Activated CD4-positive, alpha-beta T cell treated with anti-CD3 and anti-CD28 coated beads for 36 hours (primary cell): ENCODE measurements at regions of chr5 and their contacts with region 1.

Region 1: GRCh38 chr5:102778478-102778877 is 23.4 kb downstream of the PAM start:
- DNase-seq: no peak
- ATAC-seq: peak; percentile 84
- H3K4me3 Mint-ChIP-seq: peak overlapping the region; percentile 16
- H3K27ac Mint-ChIP-seq: peak overlapping the region; percentile 75
- H3K4me1 Mint-ChIP-seq: peaks cover 74% of the 10 kb centered on the region
- H3K27me3 Mint-ChIP-seq: no peaks in the 10 kb centered on the region

Region 2: DNA sequence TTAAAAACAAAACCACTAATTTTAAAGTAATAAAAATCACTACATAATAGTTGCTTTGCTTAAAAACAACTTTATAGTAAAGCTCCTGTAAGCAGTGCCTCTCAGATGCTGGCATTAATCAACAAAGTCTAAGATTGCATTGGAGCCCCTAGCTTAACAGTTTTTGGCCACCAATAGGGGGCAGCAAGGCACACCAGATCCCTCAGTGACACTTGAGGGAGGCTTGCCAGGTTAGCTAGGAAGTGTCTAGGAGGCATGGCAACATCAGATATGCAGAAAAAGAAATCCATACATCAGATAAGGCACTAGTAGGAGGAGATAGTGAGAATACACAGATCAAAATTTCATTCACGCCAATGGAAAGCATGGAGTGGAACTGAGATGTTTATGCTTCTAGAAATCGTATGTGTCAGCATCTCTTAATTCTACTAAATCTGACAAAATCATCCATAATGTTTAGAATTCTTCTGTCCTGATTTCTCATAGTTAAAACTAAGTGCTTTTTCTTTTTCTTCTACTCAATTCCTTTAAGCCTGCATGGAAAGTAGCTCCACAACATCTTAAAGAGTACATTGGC is 97.0 kb before region 1 on chr5:
- CTCF ChIA-PET with region 1: interaction called, 16 read pairs
- POLR2A ChIA-PET with region 1: no interaction called
- intact Hi-C with region 1: no loop called
- DNase-seq: peak; percentile 81
- ATAC-seq: peak; percentile 85
- H3K4me3 Mint-ChIP-seq: no peak overlapping the region
- H3K27ac Mint-ChIP-seq: no peak overlapping the region
- H3K4me1 Mint-ChIP-seq: no peaks in the 10 kb centered on the region
- H3K27me3 Mint-ChIP-seq: no peaks in the 10 kb centered on the region

Region 3: GRCh38 chr5:102762095-102762534 is 16.4 kb before region 1 on chr5:
- CTCF ChIA-PET with region 1: interaction called, 36 read pairs
- POLR2A ChIA-PET with region 1: interaction called, 5 read pairs
- intact Hi-C with region 1: loop called (anchors 1 kb)
- DNase-seq: no peak
- ATAC-seq: peak; percentile 75
- H3K4me3 Mint-ChIP-seq: peak overlapping the region; percentile 59
- H3K27ac Mint-ChIP-seq: peak overlapping the region; percentile 85
- H3K4me1 Mint-ChIP-seq: peaks cover 85% of the 10 kb centered on the region
- H3K27me3 Mint-ChIP-seq: no peaks in the 10 kb centered on the region

Region 4: DNA sequence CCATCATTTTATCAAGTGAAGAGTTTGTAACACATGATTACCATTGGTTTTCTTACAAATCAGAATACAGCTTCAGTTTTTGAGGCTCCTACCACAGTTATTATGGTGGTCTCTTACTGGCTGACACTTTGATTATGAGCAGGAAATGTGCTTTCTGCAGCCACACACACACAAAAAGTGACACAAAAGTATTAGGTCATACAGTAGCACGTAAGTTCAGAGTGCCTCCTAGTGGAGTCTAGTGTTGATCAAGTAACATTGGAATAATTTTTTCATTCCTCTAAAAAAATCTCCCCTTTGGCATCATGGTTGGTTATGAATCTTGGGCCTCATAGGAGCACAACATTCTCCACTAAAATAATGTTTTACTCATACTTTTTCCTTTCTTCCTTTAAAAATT is 14.2 kb after region 1 on chr5:
- CTCF ChIA-PET with region 1: interaction called, 17 read pairs
- POLR2A ChIA-PET with region 1: no interaction called
- intact Hi-C with region 1: no loop called
- DNase-seq: no peak
- ATAC-seq: peak; percentile 55
- H3K4me3 Mint-ChIP-seq: no peak overlapping the region
- H3K27ac Mint-ChIP-seq: no peak overlapping the region
- H3K4me1 Mint-ChIP-seq: peaks cover 6% of the 10 kb centered on the region
- H3K27me3 Mint-ChIP-seq: no peaks in the 10 kb centered on the region

Region 5: DNA sequence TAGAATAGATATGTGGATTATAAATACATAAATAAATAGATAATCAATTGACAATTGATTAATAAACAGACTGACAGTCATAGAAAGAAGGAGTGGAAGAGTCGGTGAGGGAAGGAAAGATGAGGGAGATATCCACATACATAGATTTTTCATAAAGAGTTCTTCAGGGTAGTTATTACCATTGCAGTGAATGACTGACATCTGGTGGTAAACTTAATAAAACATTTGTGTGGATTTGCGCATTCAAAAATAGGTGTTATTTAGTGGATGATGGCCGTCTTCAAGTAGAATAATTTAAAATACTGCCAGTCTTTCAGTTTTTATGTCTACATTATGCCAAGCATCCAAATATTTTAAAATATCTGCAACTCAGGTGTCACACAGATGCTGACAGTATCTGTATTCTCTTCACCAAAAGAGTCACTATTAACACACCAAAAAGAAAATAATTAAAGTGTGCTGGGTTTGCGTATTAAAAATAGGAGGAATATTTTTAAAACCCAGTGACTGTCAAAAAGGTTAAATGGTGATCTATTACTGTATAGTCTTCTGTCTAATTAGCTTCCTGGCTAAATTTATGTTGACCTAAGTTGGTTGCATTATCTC is 262.7 kb after region 1 on chr5:
- CTCF ChIA-PET with region 1: no interaction called
- POLR2A ChIA-PET with region 1: no interaction called
- intact Hi-C with region 1: loop called in 1 of 2 experiments (anchors 5 kb)
- DNase-seq: no peak
- ATAC-seq: no peak
- H3K4me3 Mint-ChIP-seq: no peak overlapping the region
- H3K27ac Mint-ChIP-seq: no peak overlapping the region
- H3K4me1 Mint-ChIP-seq: no peaks in the 10 kb centered on the region
- H3K27me3 Mint-ChIP-seq: no peaks in the 10 kb centered on the region

Region 6: DNA sequence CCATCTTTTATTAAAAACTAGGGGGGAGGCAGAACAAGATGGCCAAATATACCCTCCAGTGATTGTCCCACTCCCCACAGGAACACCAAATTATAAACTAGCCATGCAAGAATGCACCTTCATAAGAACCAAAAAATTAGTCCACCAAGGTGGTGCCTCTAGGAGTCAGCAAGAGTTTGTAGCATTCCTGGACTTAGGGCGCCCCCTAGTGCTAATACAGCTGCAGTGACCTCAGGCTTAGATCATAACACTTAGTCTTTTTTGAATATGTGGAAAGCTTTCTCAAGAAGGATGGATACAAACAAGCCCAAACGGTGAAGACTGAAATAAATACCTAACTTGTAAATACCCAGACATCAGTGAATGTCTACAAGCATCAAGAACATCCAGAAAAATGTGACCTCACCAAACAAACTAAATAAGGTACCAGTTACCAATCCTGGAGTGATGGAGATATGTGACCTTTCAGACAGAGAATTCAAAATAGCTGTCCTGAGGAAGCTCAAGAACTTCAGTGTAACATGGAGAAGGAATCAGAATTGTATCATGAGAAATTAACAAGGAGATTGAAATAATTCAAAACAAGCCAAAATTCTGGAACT is 360.9 kb after region 1 on chr5:
- CTCF ChIA-PET with region 1: interaction called, 3 read pairs
- POLR2A ChIA-PET with region 1: no interaction called
- intact Hi-C with region 1: loop called (anchors 1 to 2 kb)
- DNase-seq: peak; percentile 88
- ATAC-seq: peak; percentile 95
- H3K4me3 Mint-ChIP-seq: no peak overlapping the region
- H3K27ac Mint-ChIP-seq: no peak overlapping the region
- H3K4me1 Mint-ChIP-seq: peaks cover 8% of the 10 kb centered on the region
- H3K27me3 Mint-ChIP-seq: no peaks in the 10 kb centered on the region